ENCODE measurements at regions of chr10 and their contacts with region 1.

Region 1: GRCh38 chr10:101558202-101558601 is 29.9 kb downstream of the POLL start:
- DNase-seq: no peak
- H3K4me3 ChIP-seq: no peak overlapping the region
- H3K27ac ChIP-seq: no peak overlapping the region
- H3K4me1 ChIP-seq: peaks cover 0 to 2% (median 0%) of the 10 kb centered on the region in 4 experiments; a peak in 2 of 7 replicates
- H3K27me3 ChIP-seq: no peaks in the 10 kb centered on the region
- CTCF ChIP-seq: no peak
- EP300 ChIP-seq: no peak
- POLR2A ChIP-seq: no peak
- RAD21 ChIP-seq: no peak

Region 2: DNA sequence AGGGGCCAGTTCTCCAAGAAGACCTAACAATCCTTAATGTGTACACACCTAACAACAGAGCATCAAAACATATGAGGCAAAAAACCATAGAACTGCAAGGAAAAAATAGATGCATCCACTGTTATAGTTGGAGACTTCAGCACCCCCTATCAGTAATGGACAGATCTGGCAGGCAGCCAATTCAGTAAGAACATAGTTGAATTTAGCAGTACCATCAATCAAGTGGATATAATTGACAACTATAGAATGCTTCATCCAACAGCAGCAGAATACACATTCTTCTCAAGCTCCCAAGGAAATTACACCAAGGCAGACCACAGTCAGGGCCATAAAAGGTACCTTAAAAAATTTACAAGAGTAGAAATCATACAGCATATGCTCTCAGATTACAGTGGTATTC is 12.3 kb before region 1 on chr10:
- CTCF ChIA-PET with region 1: interaction called, 11 read pairs
- POLR2A ChIA-PET with region 1: interaction called, 3 read pairs
- DNase-seq: no peak
- H3K4me3 ChIP-seq: no peak overlapping the region
- H3K27ac ChIP-seq: no peak overlapping the region
- H3K4me1 ChIP-seq: no peaks in the 10 kb centered on the region
- H3K27me3 ChIP-seq: no peaks in the 10 kb centered on the region
- CTCF ChIP-seq: no peak
- EP300 ChIP-seq: no peak
- POLR2A ChIP-seq: no peak
- RAD21 ChIP-seq: no peak; a peak in 1 of 4 replicates

Region 3: GRCh38 chr10:101580486-101581399 is 22.5 kb after region 1 on chr10:
- CTCF ChIA-PET with region 1: no interaction called
- POLR2A ChIA-PET with region 1: no interaction called
- DNase-seq: peak in 1 of 2 experiments; percentile 47
- H3K4me3 ChIP-seq: peak overlapping the region in 1 of 4 experiments; percentile 16; a peak in 1 of 8 replicates
- H3K27ac ChIP-seq: no peak overlapping the region
- H3K4me1 ChIP-seq: peaks cover 4 to 15% (median 8%) of the 10 kb centered on the region in 4 experiments
- H3K27me3 ChIP-seq: no peaks in the 10 kb centered on the region; a peak in 1 of 7 replicates
- CTCF ChIP-seq: no peak
- EP300 ChIP-seq: no peak
- POLR2A ChIP-seq: no peak
- RAD21 ChIP-seq: no peak

Region 4: GRCh38 chr10:101655570-101655969 is 97.4 kb after region 1 on chr10:
- CTCF ChIA-PET with region 1: no interaction called
- POLR2A ChIA-PET with region 1: no interaction called
- DNase-seq: no peak
- H3K4me3 ChIP-seq: no peak overlapping the region
- H3K27ac ChIP-seq: no peak overlapping the region
- H3K4me1 ChIP-seq: peaks cover 9 to 21% (median 9%) of the 10 kb centered on the region in 4 experiments; a peak in 6 of 7 replicates
- H3K27me3 ChIP-seq: no peaks in the 10 kb centered on the region
- CTCF ChIP-seq: no peak
- EP300 ChIP-seq: no peak
- POLR2A ChIP-seq: no peak
- RAD21 ChIP-seq: no peak

Measured in H1 (cell line).